PC-9 (cell line): ENCODE measurements at regions of chr1 and their contacts with region 1.

Region 1: GRCh38 chr1:95043141-95043980 is 29.4 kb downstream of the ALG14 start:
- DNase-seq: peak; percentile 74 to 77
- H3K4me3 ChIP-seq: no peak overlapping the region
- H3K27ac ChIP-seq: no peak overlapping the region
- H3K4me1 ChIP-seq: peaks cover 32% of the 10 kb centered on the region
- H3K27me3 ChIP-seq: no peaks in the 10 kb centered on the region
- CTCF ChIP-seq: peak; percentile 100

Region 2: GRCh38 chr1:94335950-94336349 is 707.4 kb before region 1 on chr1:
- CTCF ChIA-PET with region 1: no interaction called
- POLR2A ChIA-PET with region 1: no interaction called
- intact Hi-C with region 1: loop called (anchors 2 kb)
- DNase-seq: peak; percentile 67 to 95
- H3K4me3 ChIP-seq: no peak overlapping the region
- H3K27ac ChIP-seq: peak overlapping the region; percentile 22; the same call in 1 of the 2 replicates
- H3K4me1 ChIP-seq: peaks cover 55% of the 10 kb centered on the region
- H3K27me3 ChIP-seq: no peaks in the 10 kb centered on the region
- CTCF ChIP-seq: peak; percentile 99

Region 3: DNA sequence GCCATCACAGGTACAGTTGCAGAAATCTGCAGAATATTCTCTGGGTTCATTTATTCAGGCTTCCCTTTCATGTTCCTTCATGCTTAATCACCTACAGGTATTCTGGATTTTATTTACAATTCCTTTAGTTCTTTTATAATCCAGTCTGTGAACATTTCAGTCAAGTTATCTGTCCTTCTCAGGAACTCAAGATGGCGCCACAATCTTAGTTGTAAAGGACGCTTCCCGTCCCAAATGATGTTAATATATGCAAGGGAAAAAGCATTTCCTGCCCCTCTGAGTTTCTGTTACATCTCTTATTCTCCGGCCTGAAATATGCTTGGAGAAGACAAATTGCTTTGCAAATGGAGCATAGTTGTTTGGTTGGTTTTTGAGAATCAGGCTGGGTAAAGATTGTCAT is 521.1 kb before region 1 on chr1:
- CTCF ChIA-PET with region 1: interaction called, 4 read pairs
- POLR2A ChIA-PET with region 1: no interaction called
- intact Hi-C with region 1: loop called (anchors 1 kb)
- DNase-seq: no peak
- H3K4me3 ChIP-seq: no peak overlapping the region
- H3K27ac ChIP-seq: no peak overlapping the region
- H3K4me1 ChIP-seq: peaks cover 12% of the 10 kb centered on the region
- H3K27me3 ChIP-seq: no peaks in the 10 kb centered on the region
- CTCF ChIP-seq: peak; percentile 63

Region 4: DNA sequence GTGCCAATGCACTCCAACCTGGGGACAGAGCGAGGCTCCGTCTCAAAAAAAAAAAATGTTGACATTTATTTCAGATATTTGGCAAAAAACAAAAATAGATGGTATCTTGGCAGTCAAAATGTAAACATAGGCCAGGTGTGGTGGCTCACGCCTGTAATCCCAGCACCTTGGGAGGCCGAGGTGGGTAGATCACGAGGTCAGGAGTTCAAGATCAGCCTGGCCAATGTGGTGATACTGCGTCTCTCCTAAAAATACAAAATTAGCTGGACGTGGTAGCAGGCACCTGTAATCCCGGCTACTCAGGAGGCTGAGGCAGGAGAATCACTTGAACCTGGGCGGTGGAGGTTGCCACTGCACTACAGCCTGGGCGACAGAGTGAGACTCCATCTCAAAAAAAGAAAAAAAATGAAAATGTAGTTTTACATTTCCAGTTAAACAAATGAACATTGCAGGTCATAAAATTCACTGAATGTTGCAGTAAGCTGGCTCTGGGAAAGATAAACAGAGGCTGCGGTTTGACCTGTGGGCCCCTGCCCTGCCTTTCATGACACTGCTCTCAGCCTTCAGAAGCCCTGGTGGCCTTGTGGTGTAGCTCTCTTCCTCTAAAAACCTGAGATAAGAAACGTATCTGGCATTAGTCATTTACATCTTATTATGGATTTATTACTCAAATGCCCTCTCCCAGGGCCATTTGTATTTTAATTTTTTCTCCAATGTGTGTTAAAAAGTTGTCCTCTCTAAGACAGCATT is 235.4 kb before region 1 on chr1:
- CTCF ChIA-PET with region 1: interaction called, 10 read pairs
- POLR2A ChIA-PET with region 1: no interaction called
- intact Hi-C with region 1: loop called (anchors 1 kb)
- DNase-seq: peak; percentile 70 to 89
- H3K4me3 ChIP-seq: no peak overlapping the region
- H3K27ac ChIP-seq: 0 out of 2 replicates have a peak overlapping the region, but pooled peaks have one; percentile 16
- H3K4me1 ChIP-seq: peaks cover 16% of the 10 kb centered on the region
- H3K27me3 ChIP-seq: no peaks in the 10 kb centered on the region
- CTCF ChIP-seq: no peak

Region 5: DNA sequence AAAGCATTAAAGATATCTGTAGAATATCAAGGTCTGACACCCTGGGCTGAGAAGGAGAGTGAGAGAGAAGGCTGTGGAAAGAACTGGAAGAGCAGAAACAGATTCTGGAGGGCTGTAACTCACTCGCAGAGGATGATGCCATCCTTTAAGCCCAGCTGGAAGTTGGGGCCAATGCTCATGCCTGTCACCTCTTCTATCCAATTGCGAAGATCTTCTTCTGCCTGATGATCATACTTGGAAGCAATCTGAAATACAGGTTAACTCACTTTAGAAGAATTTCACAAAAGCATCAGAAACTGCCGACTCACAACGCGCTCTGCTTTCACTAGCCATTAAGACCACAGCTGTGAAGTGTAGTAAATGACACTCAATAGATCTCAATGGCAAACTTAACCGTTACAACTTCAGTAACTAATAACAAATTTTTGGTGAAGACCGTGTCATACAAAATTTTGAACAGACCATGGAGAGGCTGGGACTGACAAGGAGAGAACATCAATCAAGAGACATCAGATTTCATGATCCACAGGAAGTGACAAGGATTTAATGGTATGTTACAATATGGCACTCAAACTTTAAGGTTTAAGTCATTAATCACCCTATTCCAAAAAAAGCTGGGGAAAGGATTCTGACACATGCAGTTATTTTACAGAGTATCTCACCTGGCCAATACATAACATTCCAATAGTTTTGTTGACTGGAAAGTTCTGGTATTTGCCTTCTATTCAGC is 139.9 kb before region 1 on chr1:
- CTCF ChIA-PET with region 1: no interaction called
- POLR2A ChIA-PET with region 1: no interaction called
- intact Hi-C with region 1: no loop called
- DNase-seq: peak in 1 of 2 experiments; percentile 46
- H3K4me3 ChIP-seq: no peak overlapping the region
- H3K27ac ChIP-seq: peak overlapping the region; percentile 28; the same call in 1 of the 2 replicates
- H3K4me1 ChIP-seq: peaks cover 16% of the 10 kb centered on the region; the same call in 1 of the 2 replicates
- H3K27me3 ChIP-seq: no peaks in the 10 kb centered on the region
- CTCF ChIP-seq: no peak

Region 6: DNA sequence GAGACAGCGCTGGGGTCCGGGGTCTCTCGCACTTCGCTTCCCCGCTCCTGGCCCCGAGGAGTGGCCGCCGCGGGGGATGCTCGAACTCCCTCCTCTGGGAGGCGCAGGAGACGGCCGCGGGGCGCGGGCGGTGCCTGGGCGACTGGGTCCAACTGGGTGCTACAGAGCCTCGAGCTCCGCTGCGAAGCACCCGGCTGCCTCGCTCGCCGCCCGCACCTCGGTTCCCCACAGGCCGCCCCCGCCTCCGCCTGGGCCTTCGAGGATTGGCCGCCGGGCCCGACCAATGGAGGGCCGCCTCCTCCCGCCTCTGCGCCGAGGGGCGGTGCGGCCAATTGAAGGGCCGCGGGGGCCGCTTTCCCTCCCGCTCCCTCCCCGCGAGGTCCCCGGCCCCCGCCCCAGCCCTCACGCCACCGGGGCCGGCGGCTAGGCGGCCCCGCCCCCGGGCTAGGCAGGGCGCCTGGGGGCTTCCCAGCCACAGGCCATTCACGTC is 116.4 kb before region 1 on chr1 and contains the start of gene CNN3:
- CTCF ChIA-PET with region 1: interaction called, 4 read pairs
- POLR2A ChIA-PET with region 1: no interaction called
- intact Hi-C with region 1: loop called (anchors 1 kb)
- DNase-seq: peak; percentile 80 to 95
- H3K4me3 ChIP-seq: peak within 1 kb of the TSS; percentile 67
- H3K27ac ChIP-seq: peak within 1 kb of the TSS; percentile 64
- H3K4me1 ChIP-seq: peaks cover 67% of the 10 kb centered on the region
- H3K27me3 ChIP-seq: no peaks in the 10 kb centered on the region
- CTCF ChIP-seq: no peak
- total RNA-seq, gene CNN3: 125 and 135 TPM in 2 replicates

Region 7: GRCh38 chr1:95146637-95147036 is 103.3 kb after region 1 on chr1:
- CTCF ChIA-PET with region 1: no interaction called
- POLR2A ChIA-PET with region 1: no interaction called
- intact Hi-C with region 1: no loop called
- DNase-seq: no peak
- H3K4me3 ChIP-seq: no peak overlapping the region
- H3K27ac ChIP-seq: no peak overlapping the region
- H3K4me1 ChIP-seq: no peaks in the 10 kb centered on the region
- H3K27me3 ChIP-seq: no peaks in the 10 kb centered on the region
- CTCF ChIP-seq: no peak

Region 8: DNA sequence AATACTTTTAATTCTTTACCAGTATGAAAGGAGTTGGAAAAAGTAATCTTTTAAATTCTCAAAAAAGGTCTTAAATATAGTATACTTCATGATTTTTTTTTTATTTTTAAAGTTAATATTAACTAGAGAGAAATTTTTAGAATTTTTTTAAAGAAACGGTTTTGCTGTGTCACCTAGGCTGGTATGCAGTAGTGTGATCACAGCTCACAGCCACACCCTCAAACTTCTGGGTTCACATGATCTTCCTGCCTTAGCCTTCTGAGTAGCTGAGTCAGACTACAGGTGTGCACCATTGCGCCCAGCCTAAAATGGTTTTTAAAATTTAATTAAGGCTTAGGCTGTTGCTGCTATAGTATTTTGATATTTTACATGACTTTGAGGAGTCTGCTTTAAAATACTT is 126.2 kb after region 1 on chr1:
- CTCF ChIA-PET with region 1: no interaction called
- POLR2A ChIA-PET with region 1: no interaction called
- intact Hi-C with region 1: no loop called
- DNase-seq: peak; percentile 54 to 91
- H3K4me3 ChIP-seq: no peak overlapping the region
- H3K27ac ChIP-seq: peak overlapping the region; percentile 74
- H3K4me1 ChIP-seq: peaks cover 31% of the 10 kb centered on the region
- H3K27me3 ChIP-seq: no peaks in the 10 kb centered on the region
- CTCF ChIP-seq: no peak